ENCODE measurements at regions of chr7 and their contacts with region 1.

Region 1: DNA sequence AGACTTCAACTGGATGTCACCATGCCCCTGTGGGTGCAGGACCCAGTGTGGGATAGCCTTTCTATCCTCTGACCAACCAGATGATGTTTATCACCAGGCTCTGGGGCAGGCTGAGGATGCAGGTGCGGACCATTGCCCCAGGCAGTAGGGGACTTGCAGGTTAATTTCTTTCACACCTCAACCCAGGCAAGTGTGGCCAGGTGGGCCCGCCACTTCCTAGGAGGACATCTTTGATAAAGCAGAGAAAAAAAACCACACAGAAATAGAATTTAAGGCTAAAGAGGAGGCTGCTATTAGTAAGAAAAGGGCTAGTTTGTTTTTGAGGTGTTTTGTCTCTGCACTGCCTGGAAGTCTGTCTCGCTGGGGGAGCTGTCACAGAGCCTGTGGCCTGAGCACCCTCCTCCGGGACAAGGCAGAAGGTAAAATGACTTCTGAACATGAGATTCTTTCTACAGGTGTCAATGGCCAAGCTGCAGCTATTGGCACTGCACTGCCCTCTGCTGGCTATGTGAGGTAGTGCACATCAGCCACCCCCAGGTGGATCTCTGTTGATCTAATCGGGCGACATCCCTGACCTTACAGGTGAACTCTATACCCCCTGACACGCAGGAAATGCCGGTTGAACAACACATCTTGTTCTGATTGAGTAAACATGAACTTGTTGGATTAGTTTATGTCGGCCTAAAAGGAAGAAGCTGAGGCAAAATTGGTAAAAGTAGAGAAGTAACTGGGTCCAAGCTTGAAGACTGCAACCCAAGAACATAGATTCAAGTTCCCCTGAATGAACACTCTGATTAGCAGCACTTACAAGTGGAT is 21.0 kb downstream of the UPP1 start:
- DNase-seq: no peak
- H3K4me3 ChIP-seq: no peak overlapping the region
- H3K27ac ChIP-seq: no peak overlapping the region
- H3K27me3 ChIP-seq: no peaks in the 10 kb centered on the region
- CTCF ChIP-seq: peak; percentile 97

Region 2: DNA sequence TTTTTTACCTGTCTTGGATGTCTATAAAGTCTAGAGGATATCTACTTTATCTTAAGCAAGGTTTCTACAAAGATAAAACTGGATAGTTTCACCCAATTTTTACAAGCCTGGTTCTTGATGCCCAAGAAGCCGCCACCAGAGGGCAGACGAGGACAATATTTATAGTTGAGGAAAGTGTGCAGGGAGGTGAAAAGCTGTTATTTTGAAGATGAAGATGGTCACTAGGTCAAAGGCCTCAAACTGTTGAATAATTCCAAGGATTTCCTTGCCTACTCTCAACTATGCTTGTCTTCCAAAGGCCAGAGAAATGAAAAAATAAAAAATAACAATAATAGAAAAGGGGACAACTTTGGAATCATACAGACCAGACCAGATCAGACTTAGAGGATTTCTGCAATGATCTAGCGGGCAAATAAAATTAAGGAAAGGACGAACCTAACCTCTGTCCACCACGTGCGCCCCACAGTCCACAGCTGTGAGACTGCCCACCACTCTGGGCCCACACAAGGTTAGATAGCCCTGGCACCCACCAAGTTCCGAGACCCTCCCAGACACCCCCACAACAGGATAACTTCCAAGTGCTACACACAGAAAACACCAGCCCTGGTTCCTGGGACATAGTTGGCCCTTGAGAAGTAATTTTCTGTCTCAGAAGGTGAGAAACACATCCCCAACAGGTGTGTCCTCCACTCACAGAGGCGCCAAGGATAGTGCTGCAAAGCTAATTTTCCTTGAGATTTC is 164.6 kb before region 1 on chr7:
- CTCF ChIA-PET with region 1: interaction called, 67 read pairs
- POLR2A ChIA-PET with region 1: no interaction called
- DNase-seq: no peak
- H3K4me3 ChIP-seq: no peak overlapping the region
- H3K27ac ChIP-seq: no peak overlapping the region
- H3K27me3 ChIP-seq: no peaks in the 10 kb centered on the region
- CTCF ChIP-seq: peak; percentile 75

Region 3: DNA sequence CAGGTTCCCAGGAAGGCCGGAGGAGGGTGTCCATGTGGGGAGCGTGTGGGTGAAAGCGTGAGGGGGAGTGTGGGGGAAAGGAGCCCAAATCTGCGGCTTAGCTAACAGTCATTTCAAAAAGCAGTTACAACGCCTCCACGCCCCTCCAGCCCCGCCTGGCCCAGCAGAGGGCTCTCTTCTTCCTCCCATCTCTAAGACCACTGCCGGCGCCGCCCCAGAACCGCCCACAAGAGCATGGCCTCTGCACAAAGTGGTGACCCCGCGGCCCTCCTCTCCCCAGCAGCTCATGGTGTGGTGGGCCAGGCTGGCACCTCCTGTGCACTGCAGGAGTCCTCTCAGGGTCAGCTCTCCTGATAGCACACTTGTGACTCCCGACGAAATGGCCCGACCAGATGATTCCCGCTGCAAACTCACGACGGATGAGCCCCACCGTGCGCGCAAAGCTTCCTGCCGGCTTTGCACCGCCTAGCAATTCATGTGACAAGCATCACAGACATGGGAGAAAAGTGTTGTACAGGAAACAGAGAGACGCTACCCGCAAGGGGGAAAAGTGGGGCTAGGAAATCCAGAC is 118.2 kb before region 1 on chr7:
- CTCF ChIA-PET with region 1: interaction called, 160 read pairs
- POLR2A ChIA-PET with region 1: interaction called, 5 read pairs
- DNase-seq: no peak
- H3K4me3 ChIP-seq: peak overlapping the region; percentile 67
- H3K27ac ChIP-seq: no peak overlapping the region
- H3K27me3 ChIP-seq: no peaks in the 10 kb centered on the region
- CTCF ChIP-seq: peak; percentile 77

Region 4: DNA sequence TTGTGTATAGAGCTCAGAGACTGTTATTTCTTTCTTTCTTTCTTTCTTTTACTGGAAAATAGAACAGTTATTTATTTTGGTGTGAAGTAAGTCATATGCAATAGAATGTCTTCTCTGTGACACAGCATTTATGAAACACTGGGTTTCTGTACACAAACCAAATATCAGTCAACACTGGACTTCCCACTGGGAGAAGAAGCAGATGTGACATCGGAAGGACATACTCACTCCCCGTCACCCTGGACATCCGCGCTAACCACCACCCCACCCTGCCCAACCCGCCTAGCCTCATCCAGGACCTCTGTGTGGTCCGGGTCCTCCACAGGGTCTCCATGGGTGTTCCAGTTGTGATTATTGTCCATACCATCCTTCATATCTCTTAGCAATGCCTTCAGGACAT is 103.2 kb before region 1 on chr7:
- CTCF ChIA-PET with region 1: interaction called, 10 read pairs
- POLR2A ChIA-PET with region 1: no interaction called
- DNase-seq: no peak
- H3K4me3 ChIP-seq: no peak overlapping the region
- H3K27ac ChIP-seq: no peak overlapping the region
- H3K27me3 ChIP-seq: no peaks in the 10 kb centered on the region
- CTCF ChIP-seq: no peak

Region 5: GRCh38 chr7:48090095-48090805 is 19.8 kb before region 1 on chr7:
- CTCF ChIA-PET with region 1: interaction called, 32 read pairs
- POLR2A ChIA-PET with region 1: no interaction called
- DNase-seq: no peak
- H3K4me3 ChIP-seq: peak overlapping the region; percentile 75
- H3K27ac ChIP-seq: peak overlapping the region; percentile 21
- H3K27me3 ChIP-seq: no peaks in the 10 kb centered on the region
- CTCF ChIP-seq: no peak

Region 6: DNA sequence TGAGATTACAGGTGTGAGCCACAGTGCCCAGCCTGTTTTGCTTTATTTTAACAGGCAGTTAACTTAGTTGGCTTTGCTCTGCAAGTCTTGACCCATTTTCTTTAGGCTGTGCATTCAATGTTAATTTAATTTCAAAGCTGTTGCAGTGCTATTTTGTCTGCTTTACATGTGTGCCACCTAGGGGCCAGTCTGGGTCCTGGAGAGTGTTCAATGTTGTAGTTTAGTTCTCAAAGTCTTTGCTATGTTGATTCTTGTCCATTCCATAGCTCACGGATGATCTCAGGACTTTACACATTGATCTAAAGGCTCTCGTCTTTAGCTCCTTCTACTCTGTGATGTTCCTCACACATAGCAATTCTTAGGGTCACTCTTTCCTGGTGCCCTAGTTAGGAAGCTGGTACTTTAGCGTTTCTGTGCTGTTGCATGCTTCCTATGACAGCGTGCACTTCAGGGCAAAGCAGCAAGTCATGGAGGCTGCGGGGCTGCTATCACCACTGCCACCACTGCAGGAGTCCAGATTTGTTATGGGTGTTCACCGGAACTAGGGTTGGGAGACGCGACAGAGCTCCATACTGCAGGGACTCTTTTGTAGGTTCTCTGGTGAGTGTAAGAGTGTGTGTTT is 44.8 kb after region 1 on chr7:
- CTCF ChIA-PET with region 1: interaction called, 24 read pairs
- POLR2A ChIA-PET with region 1: no interaction called
- DNase-seq: no peak
- H3K4me3 ChIP-seq: no peak overlapping the region
- H3K27ac ChIP-seq: no peak overlapping the region
- H3K27me3 ChIP-seq: no peaks in the 10 kb centered on the region
- CTCF ChIP-seq: peak; percentile 79